ENCODE measurements at regions of chr1 and their contacts with region 1.

Region 1: GRCh38 chr1:192477630-192478029 is 97.9 kb upstream of the RGS1 start:
- DNase-seq: no peak
- H3K4me3 ChIP-seq: no peak overlapping the region
- H3K27ac ChIP-seq: no peak overlapping the region
- H3K4me1 ChIP-seq: peaks cover 0 to 8% of the 10 kb centered on the region in 2 donors
- H3K27me3 ChIP-seq: no peaks in the 10 kb centered on the region
- CTCF ChIP-seq: peak; percentile 31 to 88 (median 68)
- POLR2A ChIP-seq: no peak

Region 2: GRCh38 chr1:192376374-192376773 is 101.3 kb before region 1 on chr1:
- intact Hi-C with region 1: no loop called
- DNase-seq: no peak
- H3K4me3 ChIP-seq: no peak overlapping the region
- H3K27ac ChIP-seq: no peak overlapping the region
- H3K4me1 ChIP-seq: no peaks in the 10 kb centered on the region
- H3K27me3 ChIP-seq: no peaks in the 10 kb centered on the region
- CTCF ChIP-seq: no peak
- POLR2A ChIP-seq: no peak

Region 3: GRCh38 chr1:192609110-192610079 is 131.8 kb after region 1 on chr1:
- intact Hi-C with region 1: loop called (anchors 2 to 5 kb)
- DNase-seq: peak; percentile 22 to 69 (median 57)
- H3K4me3 ChIP-seq: no peak overlapping the region
- H3K27ac ChIP-seq: no peak overlapping the region
- H3K4me1 ChIP-seq: peaks cover 0 to 21% of the 10 kb centered on the region in 2 donors
- H3K27me3 ChIP-seq: no peaks in the 10 kb centered on the region
- CTCF ChIP-seq: no peak
- POLR2A ChIP-seq: no peak

Region 4: GRCh38 chr1:192654591-192655251 is 177.1 kb after region 1 on chr1:
- intact Hi-C with region 1: no loop called
- DNase-seq: peak in 3 of 7 donors; percentile 13 to 27 (median 21)
- H3K4me3 ChIP-seq: no peak overlapping the region
- H3K27ac ChIP-seq: no peak overlapping the region
- H3K4me1 ChIP-seq: no peaks in the 10 kb centered on the region
- H3K27me3 ChIP-seq: no peaks in the 10 kb centered on the region
- CTCF ChIP-seq: no peak
- POLR2A ChIP-seq: no peak

Region 5: DNA sequence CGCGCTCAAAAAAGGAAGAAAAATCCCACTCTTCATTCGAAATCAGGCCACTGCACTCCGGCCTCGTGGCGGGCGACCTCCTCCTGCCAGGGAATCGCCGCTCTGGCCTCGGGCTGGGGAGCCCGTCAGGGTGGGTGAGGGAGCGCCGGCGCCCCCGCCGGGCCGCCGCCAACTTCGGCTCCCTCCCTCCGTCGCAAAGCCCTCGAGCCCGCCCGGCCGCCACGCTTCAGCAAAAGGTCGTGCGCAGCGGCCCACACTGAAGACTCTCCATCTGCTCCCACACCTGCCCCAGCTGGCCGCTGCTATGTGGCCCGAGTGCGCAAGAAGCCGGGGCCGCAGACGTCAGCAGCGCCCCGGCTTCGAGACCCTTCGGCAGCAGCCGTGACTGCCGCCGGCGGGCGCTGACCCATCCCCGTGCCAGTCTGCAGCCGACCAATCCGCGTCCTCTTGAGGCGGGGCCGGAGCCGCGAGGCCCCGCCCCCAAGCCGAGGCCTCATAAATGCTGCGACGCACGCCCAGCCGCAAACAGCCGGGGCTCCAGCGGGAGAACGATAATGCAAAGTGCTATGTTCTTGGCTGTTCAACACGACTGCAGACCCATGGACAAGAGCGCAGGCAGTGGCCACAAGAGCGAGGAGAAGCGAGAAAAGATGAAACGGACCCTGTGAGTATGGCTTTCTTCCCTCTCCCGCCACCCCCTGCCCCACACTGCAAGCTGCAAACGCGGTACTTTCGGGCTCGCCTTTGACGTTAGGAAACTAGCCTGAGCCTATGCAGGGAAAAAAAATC is 331.1 kb after region 1 on chr1 and contains the start of gene RGS2:
- intact Hi-C with region 1: loop called in 1 of 2 experiments (anchors 10 kb)
- DNase-seq: peak; percentile 94 to 97 (median 95)
- H3K4me3 ChIP-seq: peak within 1 kb of the TSS; percentile 17 to 95 (median 69)
- H3K27ac ChIP-seq: peak within 1 kb of the TSS; percentile 81 to 97 (median 91)
- H3K4me1 ChIP-seq: peaks cover 9 to 35% of the 10 kb centered on the region in 2 donors
- H3K27me3 ChIP-seq: no peaks in the 10 kb centered on the region
- CTCF ChIP-seq: peak in 1 of 6 experiments; percentile 10
- POLR2A ChIP-seq: peak; percentile 100
- total RNA-seq, gene RGS2: 96.9 to 366 (median 138) TPM

Region 6: GRCh38 chr1:193019442-193020026 is 541.9 kb after region 1 on chr1:
- intact Hi-C with region 1: loop called (anchors 10 kb)
- DNase-seq: peak in 1 of 7 donors; percentile 7
- H3K4me3 ChIP-seq: no peak overlapping the region
- H3K27ac ChIP-seq: no peak overlapping the region
- H3K4me1 ChIP-seq: peaks cover 0 to 4% of the 10 kb centered on the region in 2 donors
- H3K27me3 ChIP-seq: no peaks in the 10 kb centered on the region
- CTCF ChIP-seq: peak; percentile 36 to 78 (median 67)
- POLR2A ChIP-seq: no peak

Region 7: GRCh38 chr1:193121616-193122593 is 644.3 kb after region 1 on chr1 and contains the start of gene CDC73:
- intact Hi-C with region 1: loop called in 1 of 2 experiments (anchors 10 kb)
- DNase-seq: peak; percentile 97 to 99 (median 98)
- H3K4me3 ChIP-seq: peak within 1 kb of the TSS in 3 of 4 donors; percentile 55 to 90 (median 87)
- H3K27ac ChIP-seq: peak within 1 kb of the TSS; percentile 89 to 98 (median 92)
- H3K4me1 ChIP-seq: peaks cover 13 to 39% of the 10 kb centered on the region in 2 donors
- H3K27me3 ChIP-seq: no peaks in the 10 kb centered on the region
- CTCF ChIP-seq: peak; percentile 91 to 100 (median 94)
- POLR2A ChIP-seq: peak; percentile 86 to 98
- total RNA-seq, gene CDC73: 18.0 to 64.0 (median 37.9) TPM

Measured in adrenal gland (tissue), 19 donors.